Vagina (tissue), 2 donors: ENCODE measurements at regions of chr16 and their contacts with region 1.

Region 1: DNA sequence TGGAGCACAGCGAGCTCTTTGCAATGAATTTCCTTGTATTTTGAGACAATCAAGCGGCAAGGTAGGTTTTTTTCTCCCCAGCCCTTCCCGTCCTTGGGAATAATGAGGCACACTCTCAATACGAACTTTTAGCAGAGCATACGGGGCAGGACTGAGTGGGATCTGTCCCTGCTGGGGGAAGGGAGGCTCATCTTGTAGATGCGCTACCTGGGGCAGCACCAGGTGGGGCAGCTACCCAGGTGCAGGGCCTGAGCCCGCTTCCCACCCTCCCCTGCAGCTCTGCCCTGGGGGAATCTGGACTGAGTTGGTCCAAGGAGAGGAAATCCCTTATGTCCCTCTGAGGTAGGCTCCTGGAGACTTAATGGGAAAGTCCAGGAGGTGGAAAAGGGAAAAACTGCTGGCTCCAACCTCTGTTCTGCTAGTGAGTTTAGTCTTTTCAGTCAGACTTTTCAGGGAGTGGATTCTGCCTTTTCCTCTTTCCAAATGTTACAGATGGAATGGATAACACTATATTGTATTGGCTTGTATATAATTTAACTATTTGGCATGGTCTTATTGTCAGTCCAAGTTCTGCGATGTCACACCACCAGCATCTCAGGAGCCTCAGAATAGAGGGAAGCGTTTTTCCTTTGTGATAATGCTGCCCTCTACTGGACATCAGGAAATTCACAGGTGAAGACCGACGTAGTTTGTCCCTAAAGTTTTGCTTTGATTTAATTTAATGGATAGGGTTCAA is 9.6 kb upstream of the CES1 start:
- DNase-seq: no peak
- H3K4me3 ChIP-seq: no peak overlapping the region
- H3K27ac ChIP-seq: no peak overlapping the region
- H3K4me1 ChIP-seq: no peaks in the 10 kb centered on the region
- H3K27me3 ChIP-seq: no peaks in the 10 kb centered on the region
- CTCF ChIP-seq: peak; percentile 50 to 79 (median 59)
- POLR2A ChIP-seq: no peak

Region 2: DNA sequence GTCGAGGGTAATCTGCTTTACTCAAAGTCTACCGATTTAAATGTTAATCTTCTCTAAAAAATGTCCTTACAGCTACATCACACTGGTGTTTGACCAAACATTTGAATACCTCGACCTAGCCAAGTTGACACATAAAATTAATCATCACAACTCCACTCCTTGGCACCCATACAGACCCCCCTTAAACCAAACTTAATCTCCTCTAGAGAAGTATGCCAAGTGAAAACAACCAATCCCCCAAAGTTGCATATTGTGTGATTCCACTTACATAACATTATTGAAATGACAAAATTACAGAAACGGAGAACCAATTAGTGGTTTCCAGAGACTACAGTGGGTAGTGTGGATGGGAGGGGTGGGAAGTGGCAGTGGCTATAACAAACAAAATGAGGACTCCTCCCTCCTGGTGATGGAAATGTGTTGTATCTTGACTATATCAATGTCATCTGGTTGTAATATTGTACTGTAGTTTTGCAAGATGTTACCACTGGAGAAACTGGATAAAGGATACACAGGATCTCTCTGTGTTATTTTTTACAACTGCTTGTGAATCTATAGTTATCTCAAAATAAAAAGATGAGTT is 236.7 kb before region 1 on chr16:
- intact Hi-C with region 1: loop called (anchors 5 kb)
- DNase-seq: no peak
- H3K4me3 ChIP-seq: no peak overlapping the region
- H3K27ac ChIP-seq: no peak overlapping the region
- H3K4me1 ChIP-seq: no peaks in the 10 kb centered on the region
- H3K27me3 ChIP-seq: no peaks in the 10 kb centered on the region
- CTCF ChIP-seq: no peak
- POLR2A ChIP-seq: no peak

Region 3: DNA sequence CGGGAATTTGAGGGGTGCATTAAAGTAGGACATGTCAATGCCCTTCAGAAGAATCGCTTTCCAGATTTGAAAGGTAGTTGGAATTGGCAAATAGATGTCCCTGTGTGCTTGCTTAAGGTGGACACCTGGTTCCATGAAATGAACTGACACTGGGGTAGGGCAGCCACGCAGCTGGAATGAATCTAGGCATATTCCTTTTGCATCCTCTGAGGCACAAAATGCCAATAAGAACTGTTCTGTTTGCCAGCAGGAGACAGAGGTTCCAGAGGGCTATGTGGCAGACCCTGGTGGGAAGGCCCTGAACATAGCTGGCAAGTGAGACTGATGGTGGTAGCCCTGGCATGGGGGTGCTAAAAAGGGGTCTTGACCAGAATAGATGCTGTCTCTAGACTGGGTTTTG is 125.2 kb before region 1 on chr16:
- intact Hi-C with region 1: loop called (anchors 5 kb)
- DNase-seq: peak in 1 of 2 donors; percentile 49
- H3K4me3 ChIP-seq: no peak overlapping the region
- H3K27ac ChIP-seq: no peak overlapping the region
- H3K4me1 ChIP-seq: no peaks in the 10 kb centered on the region
- H3K27me3 ChIP-seq: no peaks in the 10 kb centered on the region
- CTCF ChIP-seq: no peak
- POLR2A ChIP-seq: no peak